ENCODE measurements at regions of chr10 and their contacts with region 1.

Region 1: GRCh38 chr10:108544494-108545120 is 1378.7 kb downstream of the XPNPEP1 start:
- DNase-seq: peak; percentile 58
- ATAC-seq: no peak
- H3K4me3 ChIP-seq: no peak overlapping the region
- H3K4me3 Mint-ChIP-seq: peak overlapping the region; percentile 55
- H3K27ac ChIP-seq: no peak overlapping the region
- H3K27ac Mint-ChIP-seq: no peak overlapping the region
- H3K4me1 ChIP-seq: peaks cover 0 to 4% of the 10 kb centered on the region in 2 donors
- H3K4me1 Mint-ChIP-seq: peaks cover 13% of the 10 kb centered on the region
- H3K27me3 ChIP-seq: no peaks in the 10 kb centered on the region
- H3K27me3 Mint-ChIP-seq: no peaks in the 10 kb centered on the region
- CTCF ChIP-seq: peak; percentile 86

Region 2: GRCh38 chr10:106705681-106706100 is 1838.9 kb before region 1 on chr10:
- CTCF ChIA-PET with region 1: no interaction called
- POLR2A ChIA-PET with region 1: no interaction called
- intact Hi-C with region 1: loop called (anchors 10 kb)
- DNase-seq: peak; percentile 57
- ATAC-seq: no peak
- H3K4me3 ChIP-seq: no peak overlapping the region
- H3K4me3 Mint-ChIP-seq: no peak overlapping the region
- H3K27ac ChIP-seq: no peak overlapping the region
- H3K27ac Mint-ChIP-seq: no peak overlapping the region
- H3K4me1 ChIP-seq: no peaks in the 10 kb centered on the region
- H3K4me1 Mint-ChIP-seq: no peaks in the 10 kb centered on the region
- H3K27me3 ChIP-seq: no peaks in the 10 kb centered on the region
- H3K27me3 Mint-ChIP-seq: peaks cover 3% of the 10 kb centered on the region
- CTCF ChIP-seq: peak; percentile 64

Region 3: DNA sequence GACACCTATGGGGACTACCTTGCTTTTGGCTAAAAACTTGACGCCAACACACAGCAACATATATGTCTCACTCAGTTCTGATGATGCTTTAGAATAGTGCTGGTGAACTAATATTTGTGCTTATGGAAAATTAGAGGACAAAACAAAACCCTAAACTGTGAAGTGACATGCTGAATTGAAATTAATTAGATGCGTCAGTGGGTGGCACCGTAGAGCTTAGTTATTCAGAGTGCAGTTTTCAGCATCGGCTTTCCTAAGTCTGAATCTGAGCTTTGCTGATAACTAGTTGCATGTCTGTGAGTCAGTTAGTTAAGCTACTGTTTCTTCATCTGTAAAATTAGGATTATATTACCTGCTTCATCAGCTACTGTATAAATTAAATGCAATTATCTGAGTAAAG is 1135.1 kb before region 1 on chr10:
- CTCF ChIA-PET with region 1: interaction called, 6 read pairs
- POLR2A ChIA-PET with region 1: no interaction called
- intact Hi-C with region 1: loop called (anchors 5 kb)
- DNase-seq: peak; percentile 61
- ATAC-seq: no peak
- H3K4me3 ChIP-seq: no peak overlapping the region
- H3K4me3 Mint-ChIP-seq: no peak overlapping the region
- H3K27ac ChIP-seq: no peak overlapping the region
- H3K27ac Mint-ChIP-seq: no peak overlapping the region
- H3K4me1 ChIP-seq: peaks cover 0 to 4% of the 10 kb centered on the region in 2 donors
- H3K4me1 Mint-ChIP-seq: no peaks in the 10 kb centered on the region
- H3K27me3 ChIP-seq: no peaks in the 10 kb centered on the region
- H3K27me3 Mint-ChIP-seq: no peaks in the 10 kb centered on the region
- CTCF ChIP-seq: no peak

Region 4: GRCh38 chr10:108424656-108425055 is 120.0 kb before region 1 on chr10:
- CTCF ChIA-PET with region 1: no interaction called
- POLR2A ChIA-PET with region 1: no interaction called
- intact Hi-C with region 1: no loop called
- DNase-seq: no peak
- ATAC-seq: no peak
- H3K4me3 ChIP-seq: no peak overlapping the region
- H3K4me3 Mint-ChIP-seq: no peak overlapping the region
- H3K27ac ChIP-seq: no peak overlapping the region
- H3K27ac Mint-ChIP-seq: no peak overlapping the region
- H3K4me1 ChIP-seq: no peaks in the 10 kb centered on the region
- H3K4me1 Mint-ChIP-seq: no peaks in the 10 kb centered on the region
- H3K27me3 ChIP-seq: no peaks in the 10 kb centered on the region
- H3K27me3 Mint-ChIP-seq: no peaks in the 10 kb centered on the region
- CTCF ChIP-seq: no peak

Region 5: DNA sequence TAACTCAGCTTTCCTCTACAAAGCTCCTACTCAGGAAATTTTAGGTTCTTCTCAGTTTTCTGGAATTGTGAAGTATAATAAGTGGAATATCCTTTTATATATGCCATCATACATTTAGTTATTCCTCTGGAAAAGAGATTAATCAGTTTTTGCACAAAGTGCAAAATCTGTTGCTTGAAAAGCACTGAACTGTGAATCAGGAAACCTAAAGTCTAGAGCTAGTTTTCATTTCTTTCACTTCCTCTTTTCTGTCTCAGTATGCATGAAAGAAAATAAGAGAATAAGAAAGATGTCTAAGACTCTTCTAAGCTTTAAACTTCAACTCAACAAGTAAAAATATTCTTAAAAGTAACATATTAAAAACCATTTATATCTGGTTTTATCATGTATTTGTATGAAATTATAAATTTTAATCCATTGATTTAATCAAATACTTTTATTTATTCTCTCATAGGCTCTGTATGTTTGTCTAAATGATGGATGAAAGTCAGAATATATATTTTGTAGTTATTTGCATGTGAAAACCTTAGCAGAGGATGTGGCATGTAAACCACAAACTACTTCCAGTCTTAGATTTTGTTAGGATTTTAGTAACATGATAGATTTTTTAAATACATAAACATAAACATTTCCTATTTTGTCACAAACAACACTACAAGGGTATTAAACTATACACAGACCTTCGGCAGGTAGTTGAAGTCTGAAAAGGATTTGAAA is 305.7 kb after region 1 on chr10:
- CTCF ChIA-PET with region 1: no interaction called
- POLR2A ChIA-PET with region 1: no interaction called
- intact Hi-C with region 1: no loop called
- DNase-seq: peak; percentile 64
- ATAC-seq: peak; percentile 76
- H3K4me3 ChIP-seq: peak overlapping the region in 1 of 5 experiments; percentile 29
- H3K4me3 Mint-ChIP-seq: peak overlapping the region; percentile 51
- H3K27ac ChIP-seq: peak overlapping the region in 1 of 2 donors; percentile 0
- H3K27ac Mint-ChIP-seq: no peak overlapping the region
- H3K4me1 ChIP-seq: peaks cover 34 to 36% of the 10 kb centered on the region in 2 donors
- H3K4me1 Mint-ChIP-seq: peaks cover 36% of the 10 kb centered on the region
- H3K27me3 ChIP-seq: no peaks in the 10 kb centered on the region
- H3K27me3 Mint-ChIP-seq: no peaks in the 10 kb centered on the region
- CTCF ChIP-seq: no peak